PC-3 (cell line): ENCODE measurements at regions of chr18 and their contacts with region 1.

Region 1: GRCh38 chr18:62425465-62426195 is 97.2 kb upstream of the ZCCHC2 start:
- DNase-seq: peak; percentile 99
- ATAC-seq: peak; percentile 83
- H3K4me3 ChIP-seq: peak overlapping the region; percentile 60
- H3K27ac ChIP-seq: peak overlapping the region; percentile 91
- H3K4me1 ChIP-seq: peaks cover 24% of the 10 kb centered on the region
- H3K27me3 ChIP-seq: no peaks in the 10 kb centered on the region
- CTCF ChIP-seq: peak; percentile 82

Region 2: DNA sequence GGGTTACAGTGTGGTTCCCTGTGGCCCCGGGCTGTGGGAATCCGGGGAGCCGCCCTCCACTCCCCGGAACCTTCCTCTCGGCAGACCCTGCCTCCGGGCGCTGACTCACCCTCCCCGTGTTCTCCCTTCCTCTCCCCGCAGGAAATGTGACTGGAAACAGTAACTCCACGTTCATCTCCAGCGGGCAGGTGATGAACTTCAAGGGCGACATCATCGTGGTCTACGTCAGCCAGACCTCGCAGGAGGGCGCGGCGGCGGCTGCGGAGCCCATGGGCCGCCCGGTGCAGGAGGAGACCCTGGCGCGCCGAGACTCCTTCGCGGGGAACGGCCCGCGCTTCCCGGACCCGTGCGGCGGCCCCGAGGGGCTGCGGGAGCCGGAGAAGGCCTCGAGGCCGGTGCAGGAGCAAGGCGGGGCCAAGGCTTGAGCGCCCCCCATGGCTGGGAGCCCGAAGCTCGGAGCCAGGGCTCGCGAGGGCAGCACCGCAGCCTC is 41.0 kb before region 1 on chr18:
- CTCF ChIA-PET with region 1: no interaction called
- POLR2A ChIA-PET with region 1: no interaction called
- intact Hi-C with region 1: loop called (anchors 2 kb)
- DNase-seq: peak; percentile 94
- ATAC-seq: peak; percentile 59
- H3K4me3 ChIP-seq: no peak overlapping the region
- H3K27ac ChIP-seq: peak overlapping the region; percentile 98
- H3K4me1 ChIP-seq: peaks cover 63% of the 10 kb centered on the region
- H3K27me3 ChIP-seq: no peaks in the 10 kb centered on the region
- CTCF ChIP-seq: no peak

Region 3: GRCh38 chr18:62505669-62506494 is 80.3 kb after region 1 on chr18:
- CTCF ChIA-PET with region 1: interaction called, 8 read pairs
- POLR2A ChIA-PET with region 1: interaction called, 3 read pairs
- intact Hi-C with region 1: loop called (anchors 1 kb)
- DNase-seq: peak; percentile 27
- ATAC-seq: peak; percentile 54
- H3K4me3 ChIP-seq: peak overlapping the region; percentile 82
- H3K27ac ChIP-seq: no peak overlapping the region
- H3K4me1 ChIP-seq: peaks cover 4% of the 10 kb centered on the region; the same call in 1 of the 2 replicates
- H3K27me3 ChIP-seq: no peaks in the 10 kb centered on the region
- CTCF ChIP-seq: no peak

Region 4: DNA sequence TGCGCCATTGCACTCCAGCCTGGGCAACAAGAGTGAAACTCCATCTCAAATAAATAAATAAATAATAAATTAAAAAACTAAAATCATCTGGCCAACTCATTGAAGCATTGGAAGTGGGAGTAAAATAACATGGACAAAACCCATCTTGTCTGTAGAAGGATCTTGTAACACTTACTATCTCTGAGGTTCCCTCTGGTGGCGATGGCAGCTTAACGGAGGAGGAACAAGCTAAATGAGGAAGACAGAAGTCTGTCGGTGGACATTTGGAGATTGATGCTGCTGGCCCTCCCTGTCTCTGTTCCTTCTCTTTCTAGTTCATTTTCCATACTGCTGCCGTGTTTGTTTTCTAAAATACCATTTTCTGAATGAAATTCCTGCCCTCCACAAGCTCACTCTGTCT is 140.6 kb after region 1 on chr18:
- CTCF ChIA-PET with region 1: interaction called, 4 read pairs
- POLR2A ChIA-PET with region 1: no interaction called
- intact Hi-C with region 1: loop called (anchors 1 kb)
- DNase-seq: peak; percentile 42
- ATAC-seq: peak; percentile 43; the same call in 1 of the 2 replicates
- H3K4me3 ChIP-seq: no peak overlapping the region
- H3K27ac ChIP-seq: no peak overlapping the region
- H3K4me1 ChIP-seq: no peaks in the 10 kb centered on the region
- H3K27me3 ChIP-seq: no peaks in the 10 kb centered on the region
- CTCF ChIP-seq: peak; percentile 42

Region 5: DNA sequence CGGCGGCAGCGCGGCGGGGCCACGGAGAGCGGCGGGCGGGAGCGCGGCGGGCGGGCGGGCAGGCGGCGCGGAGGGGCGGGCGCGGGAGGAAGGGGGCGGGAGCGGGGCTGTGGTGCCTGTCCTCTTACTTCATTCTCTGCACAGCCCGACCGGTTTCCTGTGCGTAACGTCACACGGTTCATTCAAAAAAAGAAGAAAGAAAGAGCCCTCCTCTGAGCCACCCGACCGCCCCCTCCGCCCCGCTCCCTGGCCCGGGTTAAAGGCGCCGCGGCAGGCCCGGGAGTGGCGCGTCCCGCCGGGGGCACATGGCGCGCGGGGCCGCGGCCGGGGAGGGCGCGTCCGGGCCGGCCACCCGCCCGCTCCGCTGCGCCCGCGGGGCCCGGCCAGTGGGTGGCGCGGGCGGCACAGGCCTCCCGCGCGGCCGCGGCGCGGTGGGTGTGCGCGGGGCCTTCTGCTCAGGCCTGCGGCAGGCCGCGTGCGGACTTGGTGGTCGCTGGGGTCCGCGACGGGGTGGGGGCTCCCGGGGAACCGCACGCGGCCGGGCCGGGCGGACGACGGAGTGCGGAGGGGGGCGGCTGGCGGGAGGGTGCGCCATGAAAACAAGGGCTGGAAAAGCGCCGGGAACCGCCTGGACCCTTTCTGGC is 894.5 kb after region 1 on chr18:
- CTCF ChIA-PET with region 1: interaction called, 12 read pairs
- POLR2A ChIA-PET with region 1: no interaction called
- intact Hi-C with region 1: no loop called
- DNase-seq: peak; percentile 63
- ATAC-seq: peak; percentile 67
- H3K4me3 ChIP-seq: peak overlapping the region; percentile 67
- H3K27ac ChIP-seq: no peak overlapping the region
- H3K4me1 ChIP-seq: peaks cover 27% of the 10 kb centered on the region
- H3K27me3 ChIP-seq: no peaks in the 10 kb centered on the region
- CTCF ChIP-seq: no peak